BJ (cell line): ENCODE measurements at regions of chr15 and their contacts with region 1.

Region 1: DNA sequence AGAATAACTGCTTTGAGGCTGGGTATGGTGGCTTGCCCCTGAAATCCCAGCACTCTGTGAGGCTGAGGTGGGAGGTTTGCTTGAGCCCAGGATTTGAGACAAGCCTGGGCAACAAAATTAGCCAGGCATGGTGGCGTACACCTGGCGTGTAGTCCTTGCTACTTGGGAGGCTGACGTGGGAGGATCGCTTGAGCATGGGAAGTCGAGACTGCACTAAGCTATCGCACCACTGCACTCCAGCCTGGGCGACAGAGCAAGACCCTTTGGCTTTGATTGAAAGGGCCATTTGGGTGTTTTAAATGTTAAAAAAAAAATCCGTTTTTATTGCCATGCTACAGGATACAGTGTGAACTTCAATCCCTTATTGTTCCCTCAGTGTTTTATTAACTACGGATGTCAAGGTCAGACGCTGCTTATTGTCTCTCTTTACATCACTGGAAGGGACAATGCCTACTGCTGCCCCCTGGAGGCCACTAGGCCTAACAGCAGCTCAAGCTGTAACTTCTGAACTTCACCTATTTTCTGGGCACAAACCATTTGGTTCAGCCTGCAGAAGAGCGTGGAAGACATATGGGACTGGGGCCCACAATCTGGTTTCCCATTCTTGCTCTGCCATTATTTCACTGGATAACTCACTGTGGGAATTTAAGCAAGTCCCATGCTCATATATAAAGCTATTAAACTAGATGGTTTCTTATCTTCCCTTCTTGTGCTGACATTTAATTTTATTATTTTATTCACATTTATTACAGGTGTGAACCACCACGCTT is 15.3 kb upstream of the IREB2 start:
- DNase-seq: no peak
- H3K4me3 ChIP-seq: no peak overlapping the region
- H3K27me3 ChIP-seq: peaks cover 6% of the 10 kb centered on the region
- CTCF ChIP-seq: peak; percentile 96

Region 2: GRCh38 chr15:77974098-77974414 is 448.7 kb before region 1 on chr15:
- CTCF ChIA-PET with region 1: no interaction called
- POLR2A ChIA-PET with region 1: no interaction called
- DNase-seq: no peak
- H3K4me3 ChIP-seq: no peak overlapping the region
- H3K27me3 ChIP-seq: no peaks in the 10 kb centered on the region
- CTCF ChIP-seq: no peak

Region 3: GRCh38 chr15:78407608-78408354 is 15.0 kb before region 1 on chr15:
- CTCF ChIA-PET with region 1: interaction called, 16 read pairs
- POLR2A ChIA-PET with region 1: no interaction called
- DNase-seq: no peak
- H3K4me3 ChIP-seq: no peak overlapping the region
- H3K27me3 ChIP-seq: no peaks in the 10 kb centered on the region
- CTCF ChIP-seq: no peak

Region 4: GRCh38 chr15:78437762-78438302 is 15.1 kb after region 1 on chr15 and contains the start of gene IREB2:
- CTCF ChIA-PET with region 1: interaction called, 25 read pairs
- POLR2A ChIA-PET with region 1: interaction called, 5 read pairs
- DNase-seq: peak; percentile 92
- H3K4me3 ChIP-seq: peak within 1 kb of the TSS; percentile 88
- H3K27me3 ChIP-seq: 0 out of 2 replicates have a peak, but pooled peaks cover 1% of the 10 kb centered on the region
- CTCF ChIP-seq: no peak
- polyA plus RNA-seq, gene IREB2: 11.1 and 21.7 TPM in 2 replicates